Activated CD8-positive, alpha-beta T cell treated with anti-CD3 and anti-CD28 coated beads, Interleukin-2, amount 10 ng/mL, durations not matched to agents 7 days and 5 days (primary cell): ENCODE measurements at regions of chr5 and their contacts with region 1.

Region 1: DNA sequence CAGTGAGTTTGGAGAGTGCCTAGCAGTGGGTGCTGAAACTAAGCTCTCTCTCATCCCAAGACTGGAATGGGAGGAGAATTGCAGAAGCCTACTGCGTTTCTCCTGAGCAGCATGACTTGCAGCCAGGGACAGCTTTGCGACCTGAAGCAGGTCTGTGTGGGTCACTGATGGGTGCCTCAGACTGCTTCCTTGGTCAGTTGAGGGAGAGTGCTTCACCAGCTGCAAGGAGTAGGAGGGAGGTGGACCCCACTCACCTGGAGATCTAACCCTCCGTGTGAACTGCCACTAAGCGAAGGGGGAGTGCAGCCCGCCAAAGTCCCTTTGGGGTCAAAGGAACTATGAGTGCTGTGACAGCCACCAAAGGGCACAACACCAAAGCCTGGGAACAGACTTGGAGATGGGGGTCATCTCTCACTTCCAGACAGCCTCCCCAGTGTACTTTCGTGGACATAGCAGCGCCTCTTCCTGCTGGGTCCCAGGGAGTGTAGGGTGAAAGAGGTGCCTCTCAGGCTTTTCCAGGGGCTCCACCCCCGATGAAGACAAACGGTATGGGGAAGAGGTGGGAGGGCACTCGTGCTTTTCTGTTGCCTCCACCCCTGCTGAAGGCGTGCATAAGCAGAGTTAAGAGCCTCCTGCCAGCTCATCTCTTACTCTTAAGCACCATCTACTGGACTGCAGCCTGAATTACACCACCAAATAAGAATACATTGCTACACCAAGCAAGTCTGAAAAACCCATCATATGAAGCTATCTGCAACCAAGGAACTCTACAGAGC is 34.3 kb upstream of the MACIR start:
- DNase-seq: peak; percentile 78
- ATAC-seq: peak; percentile 94
- H3K4me3 Mint-ChIP-seq: no peak overlapping the region
- H3K27ac Mint-ChIP-seq: peak overlapping the region; percentile 23
- H3K4me1 Mint-ChIP-seq: peaks cover 10% of the 10 kb centered on the region
- H3K27me3 Mint-ChIP-seq: peaks cover 28% of the 10 kb centered on the region

Region 2: GRCh38 chr5:103031607-103032006 is 192.7 kb before region 1 on chr5:
- CTCF ChIA-PET with region 1: no interaction called
- POLR2A ChIA-PET with region 1: no interaction called
- DNase-seq: no peak
- ATAC-seq: no peak
- H3K4me3 Mint-ChIP-seq: no peak overlapping the region
- H3K27ac Mint-ChIP-seq: no peak overlapping the region
- H3K4me1 Mint-ChIP-seq: no peaks in the 10 kb centered on the region
- H3K27me3 Mint-ChIP-seq: no peaks in the 10 kb centered on the region

Region 3: DNA sequence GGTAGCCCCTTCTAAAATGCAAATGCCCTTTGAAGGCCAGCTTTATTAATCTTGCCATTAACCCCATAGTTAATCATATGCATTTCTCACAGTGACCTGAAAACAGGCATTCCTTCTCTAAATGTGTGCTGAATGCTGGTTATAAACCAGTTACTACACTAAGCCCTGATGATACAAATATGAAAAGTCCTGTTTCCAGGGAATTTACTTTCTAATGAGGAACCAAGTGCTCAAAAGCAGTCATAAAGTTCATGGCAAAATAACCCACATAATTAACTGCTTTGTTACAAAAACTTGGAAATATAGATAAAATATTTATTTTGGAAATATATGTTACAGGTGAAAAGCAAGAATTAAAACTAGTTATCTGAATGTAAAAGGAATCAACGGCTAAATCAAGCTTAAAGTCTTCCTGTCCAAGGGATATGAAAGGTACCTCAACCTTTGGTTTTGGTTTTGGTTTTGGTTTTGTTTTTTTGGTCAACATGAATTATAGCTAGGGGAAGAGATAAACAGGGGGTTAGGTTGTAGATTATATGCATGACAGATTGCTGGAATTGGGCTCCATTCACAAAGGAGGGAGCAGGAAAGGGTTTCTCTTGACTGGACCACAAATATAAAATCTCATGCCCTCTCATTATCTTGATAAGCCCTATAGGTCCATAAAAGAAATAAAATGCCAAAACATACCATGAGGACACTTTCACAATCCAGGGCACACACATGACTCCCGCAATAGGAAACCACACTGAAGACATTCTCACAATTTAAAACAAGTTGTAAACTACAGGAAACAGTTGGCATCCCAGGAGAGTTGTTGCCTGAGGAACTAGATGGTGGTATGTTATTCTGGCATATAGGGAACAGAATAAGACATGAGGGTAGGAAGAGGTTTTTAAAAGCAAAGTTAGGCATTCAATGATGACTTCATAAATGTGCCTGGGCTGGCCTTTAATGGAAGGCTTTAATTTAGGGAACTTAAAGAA is 12.4 kb before region 1 on chr5:
- CTCF ChIA-PET with region 1: interaction called, 21 read pairs
- POLR2A ChIA-PET with region 1: no interaction called
- DNase-seq: no peak
- ATAC-seq: peak; percentile 69
- H3K4me3 Mint-ChIP-seq: peak overlapping the region; percentile 19
- H3K27ac Mint-ChIP-seq: peak overlapping the region; percentile 53
- H3K4me1 Mint-ChIP-seq: peaks cover 34% of the 10 kb centered on the region
- H3K27me3 Mint-ChIP-seq: no peaks in the 10 kb centered on the region

Region 4: DNA sequence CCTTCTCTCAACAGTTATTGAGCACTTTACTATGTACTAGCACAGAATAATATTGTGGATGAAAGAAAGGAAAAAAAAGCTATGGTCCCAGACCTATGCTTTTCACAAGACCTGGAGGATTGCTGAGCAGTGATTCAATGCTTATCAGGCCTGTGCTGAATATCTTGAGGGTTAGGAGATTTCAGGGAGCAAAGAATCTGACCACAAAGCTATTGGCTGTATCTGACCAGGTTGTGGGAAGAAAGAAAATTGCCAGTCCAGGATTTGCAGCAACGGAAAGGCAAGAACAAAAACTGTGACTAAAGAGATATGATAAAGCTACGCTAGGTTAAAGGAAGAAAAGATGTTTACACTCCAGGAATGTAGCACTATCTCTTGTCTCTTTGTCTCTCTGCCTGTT is 19.4 kb after region 1 on chr5:
- CTCF ChIA-PET with region 1: no interaction called
- POLR2A ChIA-PET with region 1: no interaction called
- DNase-seq: no peak
- ATAC-seq: no peak
- H3K4me3 Mint-ChIP-seq: no peak overlapping the region
- H3K27ac Mint-ChIP-seq: no peak overlapping the region
- H3K4me1 Mint-ChIP-seq: peaks cover 12% of the 10 kb centered on the region
- H3K27me3 Mint-ChIP-seq: peaks cover 44% of the 10 kb centered on the region